ENCODE measurements at regions of chr7 and their contacts with region 1.

Region 1: GRCh38 chr7:152463709-152464311 is 28.0 kb upstream of the KMT2C start:
- DNase-seq: peak; percentile 100
- H3K4me3 Mint-ChIP-seq: peak overlapping the region; percentile 89
- H3K27ac Mint-ChIP-seq: no peak overlapping the region
- H3K4me1 Mint-ChIP-seq: peaks cover 8% of the 10 kb centered on the region
- H3K27me3 Mint-ChIP-seq: no peaks in the 10 kb centered on the region

Region 2: DNA sequence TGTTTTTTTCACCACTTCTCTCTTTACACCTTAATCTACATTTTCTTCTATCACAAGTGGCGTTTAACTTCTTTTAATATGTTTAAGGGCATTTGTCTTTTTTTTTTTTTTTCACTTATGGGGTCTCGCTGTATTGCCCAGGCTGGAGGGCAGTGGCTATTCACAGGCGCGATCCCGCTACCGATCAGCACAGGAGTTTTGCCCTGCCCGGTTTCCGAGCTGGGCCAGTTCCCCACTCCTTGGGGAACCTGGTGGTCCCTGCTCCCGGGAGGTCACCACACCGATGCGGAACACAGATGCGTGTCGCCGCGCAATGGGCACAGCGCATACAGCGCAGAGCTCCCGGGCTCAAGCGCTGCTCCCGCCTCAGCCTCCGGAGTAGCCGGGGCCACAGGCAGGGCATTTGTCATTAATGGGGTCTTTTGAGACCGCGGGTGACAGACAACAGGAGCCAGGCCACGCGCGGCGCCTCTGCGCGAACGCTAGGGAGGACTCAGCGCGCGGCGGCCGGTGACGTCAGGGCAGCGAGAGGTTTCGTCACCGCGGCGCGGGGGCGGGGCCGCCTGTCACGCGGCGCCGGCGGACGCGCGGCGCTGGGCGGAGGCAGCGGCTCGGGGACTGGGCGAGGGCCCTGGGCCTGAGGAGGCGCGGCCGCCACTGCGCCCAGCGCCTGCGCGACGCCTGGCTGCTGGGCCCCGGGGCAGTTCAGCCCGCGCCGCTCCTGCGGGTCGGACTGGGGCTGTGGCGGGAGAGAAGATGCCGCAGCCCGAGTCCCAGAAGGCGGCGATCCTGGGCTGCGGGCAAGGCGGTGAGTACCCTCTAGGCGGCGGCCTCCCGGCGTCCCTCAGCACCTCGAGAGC is 438.5 kb before region 1 on chr7 and contains the start of gene GALNT11:
- CTCF ChIA-PET with region 1: no interaction called
- intact Hi-C with region 1: loop called (anchors 1 kb)
- DNase-seq: peak; percentile 81
- H3K4me3 Mint-ChIP-seq: peak within 1 kb of the TSS; percentile 80
- H3K27ac Mint-ChIP-seq: peak within 1 kb of the TSS; percentile 77
- H3K4me1 Mint-ChIP-seq: peaks cover 30% of the 10 kb centered on the region
- H3K27me3 Mint-ChIP-seq: no peaks in the 10 kb centered on the region
- total RNA-seq, gene GALNT11: 15.6 to 19.8 TPM

Region 3: GRCh38 chr7:152424348-152425108 is 39.3 kb before region 1 on chr7:
- CTCF ChIA-PET with region 1: no interaction called
- intact Hi-C with region 1: loop called (anchors 5 kb)
- DNase-seq: peak; percentile 45
- H3K4me3 Mint-ChIP-seq: no peak overlapping the region
- H3K27ac Mint-ChIP-seq: peak overlapping the region; percentile 72
- H3K4me1 Mint-ChIP-seq: peaks cover 71% of the 10 kb centered on the region
- H3K27me3 Mint-ChIP-seq: no peaks in the 10 kb centered on the region

Region 4: GRCh38 chr7:152498072-152498471 is 34.3 kb after region 1 on chr7:
- CTCF ChIA-PET with region 1: no interaction called
- intact Hi-C with region 1: no loop called
- DNase-seq: no peak
- H3K4me3 Mint-ChIP-seq: no peak overlapping the region
- H3K27ac Mint-ChIP-seq: no peak overlapping the region
- H3K4me1 Mint-ChIP-seq: no peaks in the 10 kb centered on the region
- H3K27me3 Mint-ChIP-seq: no peaks in the 10 kb centered on the region

Region 5: GRCh38 chr7:152512706-152513105 is 48.9 kb after region 1 on chr7:
- CTCF ChIA-PET with region 1: no interaction called
- intact Hi-C with region 1: loop called (anchors 2 kb)
- DNase-seq: peak; percentile 54
- H3K4me3 Mint-ChIP-seq: peak overlapping the region; percentile 38
- H3K27ac Mint-ChIP-seq: no peak overlapping the region
- H3K4me1 Mint-ChIP-seq: peaks cover 8% of the 10 kb centered on the region
- H3K27me3 Mint-ChIP-seq: no peaks in the 10 kb centered on the region

Region 6: DNA sequence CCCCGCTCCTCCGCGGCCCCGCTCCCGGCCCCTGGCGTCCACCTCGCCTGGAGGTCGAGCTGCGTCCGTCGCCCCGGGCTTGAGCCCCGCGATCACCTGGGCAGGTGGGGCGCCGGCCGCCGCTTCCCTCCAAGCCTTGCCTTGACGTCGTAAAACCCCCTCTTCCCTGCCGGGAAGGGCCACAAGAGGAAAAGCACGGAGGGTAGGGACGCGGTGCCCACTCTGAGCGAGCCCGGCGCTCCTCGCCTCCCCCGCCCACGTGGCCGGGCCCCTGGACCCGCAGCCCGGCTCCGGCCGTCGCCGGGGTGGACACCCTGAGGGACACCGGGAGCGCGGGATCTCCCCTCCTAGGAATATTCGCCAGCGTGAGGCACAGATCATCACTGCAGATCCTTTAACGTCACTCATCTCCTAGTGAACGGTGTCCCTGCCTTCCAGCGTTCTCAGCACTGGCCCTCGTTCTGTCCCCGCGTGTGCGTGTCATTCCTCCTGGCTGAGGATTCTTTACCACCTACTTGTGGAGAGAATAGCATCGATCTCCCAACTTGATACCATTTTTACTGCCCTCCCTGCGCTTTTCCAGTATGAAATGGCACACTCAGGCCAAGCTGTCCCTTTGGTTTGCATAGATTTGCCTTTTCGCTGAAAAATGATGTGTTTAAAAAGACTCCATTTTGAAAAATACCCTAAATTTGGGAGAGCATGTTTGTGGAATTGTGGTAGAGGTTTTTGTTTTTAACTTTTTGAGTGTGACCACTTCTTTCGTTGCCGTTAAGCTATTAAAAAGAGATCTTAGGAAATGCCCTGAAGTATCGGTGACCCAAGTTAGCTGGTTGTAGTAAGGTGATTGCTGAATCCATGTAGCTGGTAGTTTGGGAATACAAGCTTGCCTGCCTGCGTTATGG is 296.4 kb after region 1 on chr7:
- CTCF ChIA-PET with region 1: no interaction called
- intact Hi-C with region 1: loop called (anchors 1 kb)
- DNase-seq: peak; percentile 31
- H3K4me3 Mint-ChIP-seq: peak overlapping the region; percentile 84
- H3K27ac Mint-ChIP-seq: peak overlapping the region; percentile 79
- H3K4me1 Mint-ChIP-seq: peaks cover 20% of the 10 kb centered on the region
- H3K27me3 Mint-ChIP-seq: no peaks in the 10 kb centered on the region

Measured in activated naive CD4-positive, alpha-beta T cell treated with anti-CD3 and anti-CD28 coated beads for 36 hours (primary cell).